Gastrocnemius medialis (tissue), 4 donors: ENCODE measurements at regions of chr11 and their contacts with region 1.

Region 1: GRCh38 chr11:12696911-12697581 is 22.8 kb downstream of the TEAD1 start:
- DNase-seq: no peak
- ATAC-seq: no peak
- H3K4me3 ChIP-seq: no peak overlapping the region
- H3K27ac ChIP-seq: peak overlapping the region; percentile 89 to 96 (median 94)
- H3K4me1 ChIP-seq: peaks cover 92% of the 10 kb centered on the region in 2 donors
- H3K27me3 ChIP-seq: no peaks in the 10 kb centered on the region
- CTCF ChIP-seq: no peak
- POLR2A ChIP-seq: no peak

Region 2: DNA sequence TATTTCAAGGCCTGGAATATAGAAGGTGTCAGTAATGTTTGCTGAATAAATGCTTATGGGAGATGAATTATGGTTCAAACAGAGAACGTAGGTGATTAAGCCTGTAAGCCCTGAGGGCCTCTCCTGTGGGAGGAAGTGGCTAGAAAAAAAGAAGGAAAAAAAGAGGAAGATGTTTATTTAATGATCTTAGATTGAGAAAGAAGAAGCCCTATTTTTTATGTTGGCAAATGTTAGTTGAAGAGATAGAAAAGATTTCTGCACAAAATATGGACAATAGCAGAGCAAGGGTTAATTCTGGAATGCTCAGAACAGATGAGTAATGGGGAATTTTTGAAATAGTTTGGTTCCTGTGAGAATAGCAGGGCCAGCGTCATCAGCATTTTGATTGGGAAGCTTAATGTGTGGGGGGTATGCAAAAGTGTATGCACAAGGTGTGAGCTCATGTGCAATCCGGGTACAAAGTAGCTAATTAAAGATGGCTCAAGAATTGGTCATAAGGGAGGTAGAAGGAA is 72.8 kb after region 1 on chr11:
- in situ Hi-C with region 1: no loop called
- intact Hi-C with region 1: loop called (anchors 5 kb)
- DNase-seq: no peak
- ATAC-seq: no peak
- H3K4me3 ChIP-seq: no peak overlapping the region
- H3K27ac ChIP-seq: peak overlapping the region; percentile 78 to 87 (median 82)
- H3K4me1 ChIP-seq: peaks cover 78 to 99% of the 10 kb centered on the region in 2 donors
- H3K27me3 ChIP-seq: no peaks in the 10 kb centered on the region
- CTCF ChIP-seq: no peak
- POLR2A ChIP-seq: no peak